ENCODE measurements at regions of chr5 and their contacts with region 1.

Region 1: GRCh38 chr5:11504892-11505545 is 399.2 kb downstream of the CTNND2 start:
- DNase-seq: peak; percentile 48
- ATAC-seq: no peak; the same call in 1 of the 2 replicates
- H3K4me3 ChIP-seq: no peak overlapping the region
- H3K27ac ChIP-seq: no peak overlapping the region
- H3K4me1 ChIP-seq: peaks cover 3% of the 10 kb centered on the region; the same call in 1 of the 2 replicates
- H3K27me3 ChIP-seq: peaks cover 7% of the 10 kb centered on the region; the same call in 1 of the 2 replicates
- CTCF ChIP-seq: no peak

Region 2: DNA sequence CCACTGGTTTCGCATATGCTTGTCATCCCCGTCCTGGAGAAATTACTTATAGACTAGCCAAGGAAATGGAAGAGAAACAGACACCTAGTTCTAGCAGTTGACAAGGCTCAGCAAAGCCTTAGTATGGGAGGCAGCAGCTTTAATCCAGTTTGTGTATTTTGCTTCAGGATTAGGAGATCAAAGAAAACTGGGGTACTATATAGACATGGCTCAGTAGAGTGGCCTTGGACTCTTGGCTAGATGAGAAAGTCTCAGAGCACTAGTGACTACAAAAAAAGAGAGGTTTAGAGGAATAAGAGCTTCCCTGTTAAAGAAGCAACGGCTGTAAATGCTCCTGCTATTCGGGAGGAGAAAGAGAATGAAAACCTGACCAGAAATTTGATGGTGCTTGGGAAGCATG is 50.2 kb after region 1 on chr5:
- CTCF ChIA-PET with region 1: no interaction called
- POLR2A ChIA-PET with region 1: no interaction called
- intact Hi-C with region 1: loop called (anchors 5 kb)
- DNase-seq: no peak
- ATAC-seq: no peak
- H3K4me3 ChIP-seq: no peak overlapping the region
- H3K27ac ChIP-seq: no peak overlapping the region
- H3K4me1 ChIP-seq: no peaks in the 10 kb centered on the region
- H3K27me3 ChIP-seq: peaks cover 26% of the 10 kb centered on the region
- CTCF ChIP-seq: no peak